Mammary epithelial cell (primary cell): ENCODE measurements at regions of chr7 and their contacts with region 1.

Region 1: DNA sequence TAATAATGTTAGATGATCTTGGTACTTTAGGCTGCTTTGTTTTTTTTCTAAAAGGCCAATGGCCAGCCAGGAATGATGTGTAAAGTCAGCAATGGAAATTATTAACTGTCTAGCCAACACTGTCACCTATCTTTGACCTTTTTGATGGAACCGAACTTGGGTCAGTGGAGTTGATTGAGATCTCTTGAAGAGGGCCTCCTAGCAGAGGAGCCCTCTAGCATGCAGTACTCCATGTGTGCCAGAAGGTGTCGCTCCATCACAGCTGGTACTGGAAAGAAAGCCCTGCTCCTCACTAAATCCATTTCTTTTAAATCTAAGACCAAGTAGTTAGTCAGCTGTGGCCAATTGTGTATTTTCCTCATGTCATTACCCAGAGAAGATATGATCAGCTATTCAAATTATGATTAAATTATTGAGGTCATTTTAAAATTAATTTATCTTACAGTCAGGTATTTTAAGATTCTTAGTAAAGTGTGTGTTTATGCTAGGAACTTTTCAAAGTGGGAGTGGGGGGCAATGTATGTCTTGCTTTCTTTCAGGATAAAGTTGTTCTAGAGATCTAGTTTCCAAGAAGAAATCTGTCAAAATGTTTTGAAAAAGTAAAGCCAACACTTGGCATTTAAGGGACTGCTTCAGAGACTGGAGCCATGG is 33.1 kb upstream of the CROT start:
- DNase-seq: peak; percentile 50
- H3K4me3 ChIP-seq: no peak overlapping the region
- H3K27ac ChIP-seq: no peak overlapping the region
- H3K4me1 ChIP-seq: peaks cover 15% of the 10 kb centered on the region
- H3K27me3 ChIP-seq: no peaks in the 10 kb centered on the region
- CTCF ChIP-seq: peak; percentile 99

Region 2: GRCh38 chr7:86706406-86706805 is 605.9 kb before region 1 on chr7:
- CTCF ChIA-PET with region 1: no interaction called
- dilution Hi-C with region 1: no loop called
- in situ Hi-C with region 1: no loop called
- intact Hi-C with region 1: no loop called
- DNase-seq: no peak
- H3K4me3 ChIP-seq: no peak overlapping the region
- H3K27ac ChIP-seq: no peak overlapping the region
- H3K4me1 ChIP-seq: no peaks in the 10 kb centered on the region
- H3K27me3 ChIP-seq: no peaks in the 10 kb centered on the region
- CTCF ChIP-seq: no peak

Region 3: DNA sequence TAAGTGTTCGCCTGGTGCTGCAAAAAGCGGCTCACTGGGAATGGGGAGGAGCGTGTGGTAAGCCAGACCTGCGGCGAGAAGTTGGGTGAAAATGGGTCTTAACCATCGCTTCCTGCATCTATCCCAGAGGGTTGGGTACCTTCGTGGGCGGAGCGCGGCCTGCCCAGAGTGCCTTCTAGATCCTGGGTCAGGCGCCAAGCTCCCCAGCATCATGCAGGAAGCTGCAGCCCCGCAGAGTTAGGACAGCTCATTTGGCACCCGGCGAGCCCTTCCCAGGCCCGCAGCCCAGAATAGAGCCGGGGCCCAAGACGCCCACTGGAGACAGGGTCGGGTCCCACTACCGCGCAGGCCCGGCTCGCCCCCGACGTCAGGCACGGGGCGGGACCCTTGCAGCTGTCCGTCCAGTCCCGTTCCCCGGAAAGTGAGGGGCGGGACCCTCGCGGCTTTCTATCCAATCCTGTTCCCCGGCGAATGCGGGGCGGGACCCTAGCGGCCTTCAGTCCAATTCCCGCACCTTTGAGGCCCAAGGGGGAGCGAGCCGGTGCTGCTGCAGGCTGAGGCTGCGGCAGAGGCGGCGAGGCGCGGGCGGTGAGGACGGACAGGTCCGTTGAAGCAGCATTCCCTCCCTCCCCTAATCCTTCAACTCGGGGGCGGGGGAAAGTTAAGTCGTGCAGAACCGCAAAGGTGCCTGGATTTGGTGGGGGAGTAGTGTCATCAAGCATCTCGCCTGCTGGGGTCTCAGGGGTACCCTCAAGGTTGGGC is 33.0 kb after region 1 on chr7 and contains the start of gene CROT:
- CTCF ChIA-PET with region 1: no interaction called
- dilution Hi-C with region 1: no loop called
- in situ Hi-C with region 1: no loop called
- intact Hi-C with region 1: loop called (anchors 1 kb)
- DNase-seq: peak; percentile 92
- H3K4me3 ChIP-seq: peak within 1 kb of the TSS; percentile 76 to 96 (median 90)
- H3K27ac ChIP-seq: peak within 1 kb of the TSS; percentile 77
- H3K4me1 ChIP-seq: peaks cover 35% of the 10 kb centered on the region
- H3K27me3 ChIP-seq: no peaks in the 10 kb centered on the region
- CTCF ChIP-seq: peak in 1 of 2 donors; percentile 2
- total RNA-seq, gene CROT: 15.9 to 34.0 TPM

Region 4: DNA sequence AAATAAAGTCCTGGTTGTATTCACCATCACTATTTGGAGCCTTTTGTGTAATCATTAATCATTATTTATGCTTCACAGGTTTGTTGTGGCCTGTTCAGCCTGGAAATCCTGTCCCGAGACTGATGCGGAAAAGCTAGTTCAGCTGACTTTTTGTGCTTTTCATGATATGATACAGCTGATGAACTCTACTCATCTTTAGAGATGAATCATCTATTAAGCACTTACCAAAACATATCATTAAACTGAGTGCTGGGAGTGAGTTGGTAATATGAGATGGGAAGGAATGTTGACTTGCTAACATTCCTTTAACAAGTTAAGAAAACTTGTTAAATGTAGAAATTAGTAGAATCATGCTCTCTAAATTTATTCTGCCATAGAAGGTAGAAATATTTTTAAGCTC is 86.1 kb after region 1 on chr7:
- CTCF ChIA-PET with region 1: no interaction called
- dilution Hi-C with region 1: no loop called
- in situ Hi-C with region 1: no loop called
- intact Hi-C with region 1: loop called (anchors 5 kb)
- DNase-seq: peak; percentile 41
- H3K4me3 ChIP-seq: no peak overlapping the region
- H3K27ac ChIP-seq: no peak overlapping the region
- H3K4me1 ChIP-seq: peaks cover 6% of the 10 kb centered on the region
- H3K27me3 ChIP-seq: no peaks in the 10 kb centered on the region
- CTCF ChIP-seq: no peak

Region 5: DNA sequence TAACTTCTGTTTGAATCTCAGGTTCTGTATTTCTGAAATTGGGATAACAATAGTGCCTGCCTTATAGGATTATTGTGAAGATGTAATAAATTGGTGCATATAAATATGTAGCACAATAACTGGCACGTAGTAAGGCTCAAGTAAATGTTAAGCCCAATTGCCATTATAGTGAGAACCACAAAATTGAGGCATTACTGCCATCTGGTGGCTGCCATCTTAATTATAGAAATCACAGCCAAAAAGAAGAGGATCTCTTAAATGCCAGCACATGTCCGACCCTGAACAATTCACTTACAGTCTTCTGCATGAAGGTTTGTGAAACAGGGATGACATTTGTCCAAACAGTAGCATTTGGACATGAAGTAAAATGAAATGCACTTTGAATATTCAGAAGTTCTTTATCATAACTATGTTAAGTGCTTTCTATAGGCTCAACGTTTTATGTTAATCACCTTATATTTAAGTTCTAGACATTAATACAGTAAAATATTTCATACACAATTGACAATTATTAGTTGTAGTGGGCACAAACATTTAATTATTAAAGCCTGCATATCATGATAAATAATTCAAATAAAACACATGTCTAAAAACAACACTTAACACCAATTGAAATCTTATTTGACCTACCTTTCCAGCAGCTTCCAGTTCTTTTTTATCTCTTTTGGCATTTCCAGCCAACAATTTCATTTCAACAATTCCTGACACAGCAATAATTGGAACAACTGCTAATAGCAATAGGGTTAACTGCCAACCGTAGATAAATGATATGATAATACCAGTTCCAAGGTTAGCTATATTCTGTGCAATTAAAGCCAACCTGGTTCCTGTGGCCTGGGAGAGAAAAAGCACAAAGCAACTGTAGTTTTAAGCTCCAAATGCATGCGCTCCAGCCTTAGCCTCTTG is 104.6 kb after region 1 on chr7:
- CTCF ChIA-PET with region 1: interaction called, 3 read pairs
- dilution Hi-C with region 1: no loop called
- in situ Hi-C with region 1: loop called (anchors 5 kb)
- intact Hi-C with region 1: loop called (anchors 1 kb)
- DNase-seq: peak; percentile 44
- H3K4me3 ChIP-seq: no peak overlapping the region
- H3K27ac ChIP-seq: no peak overlapping the region
- H3K4me1 ChIP-seq: no peaks in the 10 kb centered on the region
- H3K27me3 ChIP-seq: no peaks in the 10 kb centered on the region
- CTCF ChIP-seq: peak; percentile 56

Region 6: DNA sequence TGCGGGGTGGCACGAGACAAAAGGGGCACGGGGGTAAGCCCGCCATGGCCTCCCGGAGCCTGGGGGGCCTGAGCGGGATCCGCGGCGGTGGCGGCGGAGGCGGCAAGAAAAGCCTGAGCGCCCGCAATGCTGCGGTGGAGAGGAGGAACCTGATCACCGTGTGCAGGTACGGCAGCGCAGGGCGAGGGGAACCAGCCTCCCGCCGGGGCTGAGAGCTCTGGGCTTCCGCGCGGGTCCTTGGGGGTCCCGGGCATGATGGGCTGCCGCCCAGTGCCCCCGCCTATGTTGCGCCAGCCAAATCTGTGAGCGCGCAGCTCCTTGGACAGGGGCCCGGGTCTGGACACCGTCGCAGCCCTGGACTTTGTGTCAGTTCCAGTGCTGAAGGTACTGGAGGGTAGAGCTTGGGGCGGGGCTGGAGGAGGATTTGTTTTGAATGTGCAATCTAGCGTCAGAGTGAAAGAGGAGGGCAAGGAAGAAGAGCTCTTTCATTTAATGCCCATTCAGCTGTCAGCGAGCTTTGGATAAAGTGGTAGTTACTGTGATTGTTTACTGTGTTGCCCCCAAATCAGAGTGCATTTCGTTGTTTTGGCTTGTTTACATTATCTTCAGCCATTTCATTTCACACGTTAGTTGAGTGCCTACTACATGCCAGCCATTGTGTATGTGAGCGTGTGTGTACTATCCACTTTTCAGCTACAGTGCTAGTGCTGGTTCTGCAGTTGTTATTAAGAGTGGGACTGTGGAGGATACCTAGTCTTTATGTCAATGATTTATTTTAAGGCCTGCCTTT is 316.6 kb after region 1 on chr7:
- CTCF ChIA-PET with region 1: no interaction called
- dilution Hi-C with region 1: no loop called
- in situ Hi-C with region 1: no loop called
- intact Hi-C with region 1: loop called (anchors 2 kb)
- DNase-seq: peak; percentile 49
- H3K4me3 ChIP-seq: peak overlapping the region; percentile 76 to 82 (median 81)
- H3K27ac ChIP-seq: no peak overlapping the region
- H3K4me1 ChIP-seq: peaks cover 18% of the 10 kb centered on the region
- H3K27me3 ChIP-seq: no peaks in the 10 kb centered on the region
- CTCF ChIP-seq: no peak

Region 7: DNA sequence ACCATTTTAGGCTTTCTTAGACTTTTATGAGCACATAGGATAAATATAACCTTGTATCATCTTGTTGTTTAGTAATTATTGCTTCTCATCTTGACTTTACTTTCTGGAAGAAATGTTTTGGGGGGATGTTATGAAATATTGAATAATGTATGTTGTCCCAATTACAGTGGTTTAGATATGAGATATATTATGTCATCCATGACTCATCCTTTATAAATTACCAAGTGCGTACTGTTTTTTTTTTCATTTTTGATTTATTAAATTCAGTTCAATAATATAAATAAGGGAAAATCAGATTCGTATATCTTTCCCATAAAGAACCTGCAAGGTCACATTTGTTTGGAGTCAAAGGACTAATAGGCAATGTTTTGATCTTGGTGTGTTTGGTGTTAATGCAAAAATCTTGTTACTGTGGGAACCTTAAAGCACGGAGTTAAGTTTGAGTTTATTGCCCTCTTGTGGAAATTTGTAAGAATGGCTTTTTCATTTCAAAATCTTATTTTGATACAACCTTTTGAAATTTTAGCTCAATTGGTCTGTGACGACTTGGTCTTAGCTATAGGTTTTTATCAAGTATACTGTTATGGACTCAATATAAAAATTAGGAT is 798.9 kb after region 1 on chr7:
- CTCF ChIA-PET with region 1: no interaction called
- dilution Hi-C with region 1: no loop called
- in situ Hi-C with region 1: no loop called
- intact Hi-C with region 1: loop called (anchors 2 kb)
- DNase-seq: peak; percentile 23
- H3K4me3 ChIP-seq: no peak overlapping the region
- H3K27ac ChIP-seq: no peak overlapping the region
- H3K4me1 ChIP-seq: no peaks in the 10 kb centered on the region
- H3K27me3 ChIP-seq: no peaks in the 10 kb centered on the region
- CTCF ChIP-seq: peak; percentile 38 to 54